CD4-positive, alpha-beta T cell (primary cell): ENCODE measurements at regions of chr3 and their contacts with region 1.

Region 1: GRCh38 chr3:141487521-141488252 is 860 bp downstream of the RASA2 start:
- DNase-seq: peak; percentile 73 to 95 (median 82)
- ATAC-seq: peak; percentile 64
- H3K4me3 ChIP-seq: peak overlapping the region; percentile 75
- H3K4me3 Mint-ChIP-seq: peak overlapping the region; percentile 87
- H3K27ac ChIP-seq: peak overlapping the region; percentile 75 to 97
- H3K27ac Mint-ChIP-seq: peak overlapping the region; percentile 82
- H3K4me1 ChIP-seq: peaks cover 33% of the 10 kb centered on the region
- H3K4me1 Mint-ChIP-seq: peaks cover 73% of the 10 kb centered on the region
- H3K27me3 ChIP-seq: no peaks in the 10 kb centered on the region
- H3K27me3 Mint-ChIP-seq: no peaks in the 10 kb centered on the region
- CTCF ChIP-seq: no peak

Region 2: DNA sequence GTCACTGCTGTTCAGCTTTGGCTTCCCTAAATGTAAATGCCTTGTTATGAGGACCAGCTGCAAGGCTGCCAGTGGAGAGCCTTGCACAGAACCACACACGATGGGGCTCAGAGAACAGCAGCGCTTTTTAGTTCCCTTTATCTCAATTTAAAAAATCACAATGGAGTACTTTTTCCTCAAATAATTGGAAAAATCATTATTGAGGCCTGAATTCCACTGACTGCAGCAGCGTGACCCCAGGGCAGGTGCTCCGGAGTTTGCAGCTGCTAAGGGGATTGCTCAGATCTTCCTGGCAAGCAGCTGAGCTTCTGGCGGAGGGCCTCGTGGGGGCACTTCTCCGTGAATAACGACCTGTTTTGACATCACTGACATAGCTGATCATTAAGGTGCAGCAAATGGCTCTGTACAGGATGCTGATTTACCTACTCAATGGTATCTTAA is 1055.4 kb before region 1 on chr3:
- CTCF ChIA-PET with region 1: no interaction called
- POLR2A ChIA-PET with region 1: no interaction called
- intact Hi-C with region 1: no loop called
- DNase-seq: no peak
- ATAC-seq: no peak
- H3K4me3 ChIP-seq: no peak overlapping the region
- H3K4me3 Mint-ChIP-seq: no peak overlapping the region
- H3K27ac ChIP-seq: no peak overlapping the region
- H3K27ac Mint-ChIP-seq: no peak overlapping the region
- H3K4me1 ChIP-seq: no peaks in the 10 kb centered on the region
- H3K4me1 Mint-ChIP-seq: no peaks in the 10 kb centered on the region
- H3K27me3 ChIP-seq: no peaks in the 10 kb centered on the region
- H3K27me3 Mint-ChIP-seq: peaks cover 16% of the 10 kb centered on the region
- CTCF ChIP-seq: no peak

Region 3: GRCh38 chr3:141303481-141304223 is 184.0 kb before region 1 on chr3:
- CTCF ChIA-PET with region 1: no interaction called
- POLR2A ChIA-PET with region 1: interaction called, 18 read pairs
- intact Hi-C with region 1: no loop called
- DNase-seq: peak in 11 of 14 experiments; percentile 16 to 89 (median 60)
- ATAC-seq: peak; percentile 43
- H3K4me3 ChIP-seq: no peak overlapping the region
- H3K4me3 Mint-ChIP-seq: no peak overlapping the region
- H3K27ac ChIP-seq: no peak overlapping the region
- H3K27ac Mint-ChIP-seq: no peak overlapping the region
- H3K4me1 ChIP-seq: peaks cover 61% of the 10 kb centered on the region
- H3K4me1 Mint-ChIP-seq: peaks cover 81% of the 10 kb centered on the region
- H3K27me3 ChIP-seq: no peaks in the 10 kb centered on the region
- H3K27me3 Mint-ChIP-seq: no peaks in the 10 kb centered on the region
- CTCF ChIP-seq: peak; percentile 80

Region 4: GRCh38 chr3:141477224-141477623 is 10.5 kb before region 1 on chr3:
- CTCF ChIA-PET with region 1: interaction called, 5 read pairs
- POLR2A ChIA-PET with region 1: interaction called, 8 read pairs
- intact Hi-C with region 1: loop called in 1 of 2 experiments (anchors 1 kb)
- DNase-seq: no peak
- ATAC-seq: no peak
- H3K4me3 ChIP-seq: no peak overlapping the region
- H3K4me3 Mint-ChIP-seq: no peak overlapping the region
- H3K27ac ChIP-seq: no peak overlapping the region
- H3K27ac Mint-ChIP-seq: no peak overlapping the region
- H3K4me1 ChIP-seq: peaks cover 19% of the 10 kb centered on the region
- H3K4me1 Mint-ChIP-seq: peaks cover 49% of the 10 kb centered on the region
- H3K27me3 ChIP-seq: no peaks in the 10 kb centered on the region
- H3K27me3 Mint-ChIP-seq: no peaks in the 10 kb centered on the region
- CTCF ChIP-seq: no peak

Region 5: GRCh38 chr3:141523615-141524375 is 36.1 kb after region 1 on chr3:
- CTCF ChIA-PET with region 1: no interaction called
- POLR2A ChIA-PET with region 1: interaction called, 37 read pairs
- intact Hi-C with region 1: loop called in 1 of 2 experiments (anchors 5 kb)
- DNase-seq: no peak
- ATAC-seq: no peak
- H3K4me3 ChIP-seq: no peak overlapping the region
- H3K4me3 Mint-ChIP-seq: no peak overlapping the region
- H3K27ac ChIP-seq: no peak overlapping the region
- H3K27ac Mint-ChIP-seq: peak overlapping the region; percentile 94
- H3K4me1 ChIP-seq: peaks cover 25% of the 10 kb centered on the region
- H3K4me1 Mint-ChIP-seq: peaks cover 90% of the 10 kb centered on the region
- H3K27me3 ChIP-seq: no peaks in the 10 kb centered on the region
- H3K27me3 Mint-ChIP-seq: no peaks in the 10 kb centered on the region
- CTCF ChIP-seq: no peak

Region 6: DNA sequence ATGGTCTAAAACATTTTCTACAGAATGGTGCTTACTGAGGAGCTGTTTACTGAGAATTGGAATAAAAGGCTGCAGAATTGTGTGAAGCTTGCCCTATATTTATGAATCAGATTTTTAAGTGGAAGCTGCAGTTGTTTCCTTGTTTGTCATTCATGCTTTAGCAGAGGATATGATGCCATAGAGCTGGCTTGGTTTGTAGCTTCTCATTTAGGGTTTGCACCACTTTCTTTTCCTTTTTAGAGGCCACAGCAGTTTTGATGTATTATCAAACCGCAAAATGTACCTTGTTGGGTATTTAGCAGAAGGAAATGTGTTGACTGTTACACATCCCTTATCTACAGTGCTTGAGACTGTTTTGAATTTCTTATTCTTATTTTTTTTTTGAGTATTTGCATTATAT is 65.4 kb after region 1 on chr3:
- CTCF ChIA-PET with region 1: interaction called, 4 read pairs
- POLR2A ChIA-PET with region 1: interaction called, 91 read pairs
- intact Hi-C with region 1: loop called in 1 of 2 experiments (anchors 1 kb)
- DNase-seq: peak in 5 of 14 experiments; percentile 7 to 90 (median 71)
- ATAC-seq: peak; percentile 84
- H3K4me3 ChIP-seq: no peak overlapping the region
- H3K4me3 Mint-ChIP-seq: peak overlapping the region; percentile 47
- H3K27ac ChIP-seq: no peak overlapping the region
- H3K27ac Mint-ChIP-seq: peak overlapping the region; percentile 81
- H3K4me1 ChIP-seq: peaks cover 17% of the 10 kb centered on the region
- H3K4me1 Mint-ChIP-seq: peaks cover 63% of the 10 kb centered on the region
- H3K27me3 ChIP-seq: no peaks in the 10 kb centered on the region
- H3K27me3 Mint-ChIP-seq: no peaks in the 10 kb centered on the region
- CTCF ChIP-seq: no peak